Activated naive CD8-positive, alpha-beta T cell treated with anti-CD3 and anti-CD28 coated beads, Interleukin-2, amount 10 ng/mL, durations not matched to agents 7 days and 5 days (primary cell): ENCODE measurements at regions of chr11 and their contacts with region 1.

Region 1: GRCh38 chr11:62591448-62592145 is at the start of gene TUT1:
- DNase-seq: peak; percentile 91
- ATAC-seq: peak; percentile 88
- H3K4me3 Mint-ChIP-seq: peak within 1 kb of the TSS; percentile 100
- H3K27ac Mint-ChIP-seq: peak within 1 kb of the TSS; percentile 99
- H3K4me1 Mint-ChIP-seq: peaks cover 38% of the 10 kb centered on the region
- H3K27me3 Mint-ChIP-seq: no peaks in the 10 kb centered on the region
- total RNA-seq, gene TUT1: 27.2 to 38.2 TPM

Region 2: GRCh38 chr11:62427630-62428233 is 163.9 kb before region 1 on chr11:
- POLR2A ChIA-PET with region 1: interaction called, 11 read pairs
- DNase-seq: no peak
- ATAC-seq: peak; percentile 28
- H3K4me3 Mint-ChIP-seq: peak overlapping the region; percentile 29
- H3K27ac Mint-ChIP-seq: peak overlapping the region; percentile 90
- H3K4me1 Mint-ChIP-seq: peaks cover 38% of the 10 kb centered on the region
- H3K27me3 Mint-ChIP-seq: peaks cover 11% of the 10 kb centered on the region

Region 3: GRCh38 chr11:62573592-62574362 is 17.8 kb before region 1 on chr11 and contains the start of gene EEF1G:
- POLR2A ChIA-PET with region 1: interaction called, 68 read pairs
- DNase-seq: peak; percentile 94
- ATAC-seq: peak; percentile 95
- H3K4me3 Mint-ChIP-seq: peak within 1 kb of the TSS; percentile 99
- H3K27ac Mint-ChIP-seq: peak within 1 kb of the TSS; percentile 95
- H3K4me1 Mint-ChIP-seq: peaks cover 41% of the 10 kb centered on the region
- H3K27me3 Mint-ChIP-seq: no peaks in the 10 kb centered on the region
- total RNA-seq, gene EEF1G: 1,132 to 1,152 TPM

Region 4: GRCh38 chr11:62621567-62622470 is 30.2 kb after region 1 on chr11 and contains the start of gene B3GAT3:
- POLR2A ChIA-PET with region 1: interaction called, 48 read pairs
- DNase-seq: peak; percentile 94
- ATAC-seq: peak; percentile 87
- H3K4me3 Mint-ChIP-seq: peak within 1 kb of the TSS; percentile 93
- H3K27ac Mint-ChIP-seq: peak within 1 kb of the TSS; percentile 99
- H3K4me1 Mint-ChIP-seq: peaks cover 24% of the 10 kb centered on the region
- H3K27me3 Mint-ChIP-seq: no peaks in the 10 kb centered on the region
- total RNA-seq, gene B3GAT3: 76.1 to 87.0 TPM

Region 5: GRCh38 chr11:62652161-62653006 is 60.8 kb after region 1 on chr11:
- POLR2A ChIA-PET with region 1: interaction called, 22 read pairs
- DNase-seq: no peak
- ATAC-seq: no peak
- H3K4me3 Mint-ChIP-seq: peak overlapping the region; percentile 94
- H3K27ac Mint-ChIP-seq: peak overlapping the region; percentile 91
- H3K4me1 Mint-ChIP-seq: peaks cover 17% of the 10 kb centered on the region
- H3K27me3 Mint-ChIP-seq: no peaks in the 10 kb centered on the region

Region 6: GRCh38 chr11:62678770-62679696 is 87.4 kb after region 1 on chr11 and contains the start of gene UBXN1:
- POLR2A ChIA-PET with region 1: interaction called, 14 read pairs
- DNase-seq: peak; percentile 82
- ATAC-seq: peak; percentile 79
- H3K4me3 Mint-ChIP-seq: peak within 1 kb of the TSS; percentile 85
- H3K27ac Mint-ChIP-seq: peak within 1 kb of the TSS; percentile 88
- H3K4me1 Mint-ChIP-seq: peaks cover 20% of the 10 kb centered on the region
- H3K27me3 Mint-ChIP-seq: no peaks in the 10 kb centered on the region
- total RNA-seq, gene UBXN1: 135 to 136 TPM

Region 7: DNA sequence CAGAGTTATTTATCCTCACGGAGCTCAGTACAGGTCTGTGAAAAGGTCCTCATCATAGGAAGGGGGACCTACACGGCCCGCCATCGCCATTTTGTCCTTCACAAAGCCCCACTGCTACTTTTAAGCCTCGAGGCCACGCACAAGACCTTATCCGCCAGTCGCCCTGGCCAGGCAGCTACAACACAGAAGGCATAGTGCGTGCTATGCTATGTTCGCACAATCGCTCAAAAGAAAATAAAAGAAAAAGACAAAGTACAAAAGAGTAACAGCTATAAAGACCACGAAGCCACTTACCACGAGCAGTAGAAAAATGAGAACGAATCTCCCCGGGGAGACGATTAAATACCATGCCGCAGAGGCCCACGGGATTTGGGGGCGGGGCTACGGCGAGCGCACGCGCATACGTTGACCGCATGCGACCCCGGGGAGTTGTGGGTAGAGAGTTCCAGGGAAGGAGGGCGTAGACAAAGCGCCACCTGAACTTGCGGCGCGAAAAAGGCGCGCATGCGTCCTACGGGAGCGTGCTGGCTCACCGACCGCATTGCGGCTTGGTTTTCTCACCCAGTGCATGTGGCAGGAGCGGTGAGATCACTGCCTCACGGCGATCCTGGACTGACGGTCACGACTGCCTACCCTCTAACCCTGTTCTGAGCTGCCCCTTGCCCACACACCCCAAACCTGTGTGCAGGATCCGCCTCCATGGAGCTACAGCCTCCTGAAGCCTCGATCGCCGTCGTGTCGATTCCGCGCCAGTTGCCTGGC is 264.2 kb after region 1 on chr11:
- POLR2A ChIA-PET with region 1: interaction called, 16 read pairs
- DNase-seq: peak; percentile 99
- ATAC-seq: peak; percentile 89
- H3K4me3 Mint-ChIP-seq: peak overlapping the region; percentile 96
- H3K27ac Mint-ChIP-seq: peak overlapping the region; percentile 98
- H3K4me1 Mint-ChIP-seq: peaks cover 45% of the 10 kb centered on the region
- H3K27me3 Mint-ChIP-seq: no peaks in the 10 kb centered on the region